T-cell (primary cell): ENCODE measurements at regions of chr5 and their contacts with region 1.

Region 1: GRCh38 chr5:80355686-80356085 is 35.9 kb downstream of the SPZ1 start:
- DNase-seq: no peak
- ATAC-seq: no peak
- H3K4me3 ChIP-seq: no peak overlapping the region
- H3K4me3 Mint-ChIP-seq: no peak overlapping the region
- H3K27ac ChIP-seq: no peak overlapping the region
- H3K27ac Mint-ChIP-seq: no peak overlapping the region
- H3K4me1 ChIP-seq: no peaks in the 10 kb centered on the region
- H3K4me1 Mint-ChIP-seq: no peaks in the 10 kb centered on the region
- H3K27me3 ChIP-seq: peaks cover 0 to 2% of the 10 kb centered on the region in 2 experiments
- H3K27me3 Mint-ChIP-seq: peaks cover 0 to 1% of the 10 kb centered on the region in 2 donors

Region 2: GRCh38 chr5:79297661-79298060 is 1058.0 kb before region 1 on chr5:
- CTCF ChIA-PET with region 1: interaction called in 1 of 2 experiments, 11 read pairs
- POLR2A ChIA-PET with region 1: no interaction called
- DNase-seq: no peak
- ATAC-seq: no peak
- H3K4me3 ChIP-seq: no peak overlapping the region
- H3K4me3 Mint-ChIP-seq: no peak overlapping the region
- H3K27ac ChIP-seq: no peak overlapping the region
- H3K27ac Mint-ChIP-seq: no peak overlapping the region
- H3K4me1 ChIP-seq: no peaks in the 10 kb centered on the region
- H3K4me1 Mint-ChIP-seq: peaks cover 0 to 5% (median 0%) of the 10 kb centered on the region in 3 donors
- H3K27me3 ChIP-seq: no peaks in the 10 kb centered on the region
- H3K27me3 Mint-ChIP-seq: no peaks in the 10 kb centered on the region

Region 3: GRCh38 chr5:80399526-80400239 is 44.0 kb after region 1 on chr5:
- CTCF ChIA-PET with region 1: no interaction called
- POLR2A ChIA-PET with region 1: no interaction called
- DNase-seq: peak in 2 of 35 experiments; percentile 6 to 8
- ATAC-seq: no peak
- H3K4me3 ChIP-seq: no peak overlapping the region
- H3K4me3 Mint-ChIP-seq: no peak overlapping the region
- H3K27ac ChIP-seq: no peak overlapping the region
- H3K27ac Mint-ChIP-seq: no peak overlapping the region
- H3K4me1 ChIP-seq: no peaks in the 10 kb centered on the region
- H3K4me1 Mint-ChIP-seq: no peaks in the 10 kb centered on the region
- H3K27me3 ChIP-seq: peaks cover 0 to 14% of the 10 kb centered on the region in 2 experiments
- H3K27me3 Mint-ChIP-seq: peaks cover 9 to 11% of the 10 kb centered on the region in 2 donors